ENCODE measurements at regions of chr4 and their contacts with region 1.

Region 1: GRCh38 chr4:139295206-139295941 is 5.9 kb upstream of the NAA15 start:
- DNase-seq: peak; percentile 84
- H3K4me3 ChIP-seq: peak overlapping the region; percentile 82
- H3K27ac ChIP-seq: peak overlapping the region; percentile 47
- H3K27me3 ChIP-seq: no peaks in the 10 kb centered on the region
- CTCF ChIP-seq: peak; percentile 92

Region 2: DNA sequence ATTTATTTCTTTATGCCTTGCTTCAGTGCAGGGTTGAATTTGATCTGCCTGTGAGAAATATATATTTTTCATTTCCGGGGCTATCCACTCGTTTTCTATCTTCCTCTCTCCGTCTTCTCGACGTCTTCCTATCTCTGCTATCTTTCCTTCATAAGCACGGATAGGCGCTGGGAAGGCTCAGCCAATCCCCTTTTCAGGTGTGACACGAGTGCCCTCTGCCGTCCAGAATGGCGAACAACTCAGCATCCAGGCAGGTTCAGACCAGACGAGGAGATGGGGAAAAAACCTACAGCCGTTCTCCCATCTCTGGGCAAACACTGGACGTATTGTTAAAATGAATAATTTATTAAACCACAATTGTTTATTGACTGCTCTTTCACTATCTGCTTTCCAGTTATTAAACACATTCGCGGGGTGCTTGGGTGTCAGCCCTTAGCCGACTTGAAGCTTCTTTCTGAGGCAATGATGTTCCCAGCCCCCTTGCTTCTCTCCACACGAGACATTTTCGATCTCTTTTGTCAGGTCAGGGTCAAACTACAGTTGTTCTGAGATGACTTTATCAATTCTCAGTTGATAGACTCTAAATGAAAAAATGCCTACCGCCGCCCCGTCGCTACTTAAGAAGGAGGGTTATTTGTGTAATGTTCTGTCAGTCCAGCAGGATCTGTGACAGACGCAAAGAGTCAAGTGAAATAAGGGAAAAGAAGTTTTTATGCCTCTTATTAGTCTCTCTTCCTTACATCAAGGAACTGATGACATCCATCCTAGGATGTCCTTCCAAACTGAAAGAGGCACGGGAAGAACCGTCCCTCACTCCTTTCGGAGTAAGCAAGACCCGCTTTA is 376.1 kb before region 1 on chr4:
- CTCF ChIA-PET with region 1: no interaction called
- POLR2A ChIA-PET with region 1: no interaction called
- DNase-seq: peak; percentile 65
- H3K4me3 ChIP-seq: peak overlapping the region; percentile 38
- H3K27ac ChIP-seq: no peak overlapping the region
- H3K27me3 ChIP-seq: no peaks in the 10 kb centered on the region
- CTCF ChIP-seq: peak; percentile 94

Region 3: GRCh38 chr4:139030614-139031235 is 264.6 kb before region 1 on chr4:
- CTCF ChIA-PET with region 1: interaction called, 59 read pairs
- POLR2A ChIA-PET with region 1: no interaction called
- DNase-seq: peak; percentile 65
- H3K4me3 ChIP-seq: no peak overlapping the region
- H3K27ac ChIP-seq: no peak overlapping the region
- H3K27me3 ChIP-seq: no peaks in the 10 kb centered on the region
- CTCF ChIP-seq: peak; percentile 87

Region 4: GRCh38 chr4:139099366-139099982 is 195.9 kb before region 1 on chr4:
- CTCF ChIA-PET with region 1: interaction called, 26 read pairs
- POLR2A ChIA-PET with region 1: no interaction called
- DNase-seq: peak; percentile 63
- H3K4me3 ChIP-seq: no peak overlapping the region
- H3K27ac ChIP-seq: no peak overlapping the region
- H3K27me3 ChIP-seq: no peaks in the 10 kb centered on the region
- CTCF ChIP-seq: peak; percentile 89

Region 5: GRCh38 chr4:139177868-139178611 is 117.3 kb before region 1 on chr4:
- CTCF ChIA-PET with region 1: interaction called, 15 read pairs
- POLR2A ChIA-PET with region 1: interaction called, 4 read pairs
- DNase-seq: peak; percentile 72
- H3K4me3 ChIP-seq: peak overlapping the region; percentile 81
- H3K27ac ChIP-seq: peak overlapping the region; percentile 87
- H3K27me3 ChIP-seq: no peaks in the 10 kb centered on the region
- CTCF ChIP-seq: no peak

Region 6: DNA sequence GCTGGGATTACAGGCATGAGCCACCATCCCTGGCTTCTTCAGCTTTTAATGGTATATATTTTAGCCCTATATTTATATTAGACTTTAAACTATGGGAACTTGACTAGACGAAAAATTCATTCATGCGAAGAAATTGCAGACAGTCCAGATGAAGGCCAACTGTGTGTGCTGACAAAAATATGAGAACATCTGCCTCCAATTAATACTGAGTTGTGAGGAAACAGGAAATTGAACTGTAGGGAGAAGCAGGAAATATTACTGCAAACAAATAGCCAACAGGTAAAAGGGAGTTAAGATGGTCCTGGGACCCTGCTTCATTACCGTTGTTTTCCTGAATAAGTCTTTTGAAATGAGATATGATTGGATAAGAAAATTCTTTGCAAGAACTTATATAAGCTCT is 41.7 kb before region 1 on chr4:
- CTCF ChIA-PET with region 1: interaction called, 15 read pairs
- POLR2A ChIA-PET with region 1: no interaction called
- DNase-seq: no peak
- H3K4me3 ChIP-seq: no peak overlapping the region
- H3K27ac ChIP-seq: no peak overlapping the region
- H3K27me3 ChIP-seq: no peaks in the 10 kb centered on the region
- CTCF ChIP-seq: no peak

Region 7: GRCh38 chr4:139279760-139280620 is 15.4 kb before region 1 on chr4 and contains the start of gene MGARP:
- CTCF ChIA-PET with region 1: interaction called, 44 read pairs
- POLR2A ChIA-PET with region 1: interaction called, 11 read pairs
- DNase-seq: no peak
- H3K4me3 ChIP-seq: peak within 1 kb of the TSS; percentile 69
- H3K27ac ChIP-seq: peak within 1 kb of the TSS; percentile 59
- H3K27me3 ChIP-seq: no peaks in the 10 kb centered on the region
- CTCF ChIP-seq: no peak
- polyA plus RNA-seq, gene MGARP: 42.6 and 57.7 TPM in 2 replicates

Region 8: GRCh38 chr4:139319571-139319970 is 24.2 kb after region 1 on chr4:
- CTCF ChIA-PET with region 1: interaction called, 13 read pairs
- POLR2A ChIA-PET with region 1: no interaction called
- DNase-seq: no peak
- H3K4me3 ChIP-seq: no peak overlapping the region
- H3K27ac ChIP-seq: no peak overlapping the region
- H3K27me3 ChIP-seq: no peaks in the 10 kb centered on the region
- CTCF ChIP-seq: no peak

Region 9: DNA sequence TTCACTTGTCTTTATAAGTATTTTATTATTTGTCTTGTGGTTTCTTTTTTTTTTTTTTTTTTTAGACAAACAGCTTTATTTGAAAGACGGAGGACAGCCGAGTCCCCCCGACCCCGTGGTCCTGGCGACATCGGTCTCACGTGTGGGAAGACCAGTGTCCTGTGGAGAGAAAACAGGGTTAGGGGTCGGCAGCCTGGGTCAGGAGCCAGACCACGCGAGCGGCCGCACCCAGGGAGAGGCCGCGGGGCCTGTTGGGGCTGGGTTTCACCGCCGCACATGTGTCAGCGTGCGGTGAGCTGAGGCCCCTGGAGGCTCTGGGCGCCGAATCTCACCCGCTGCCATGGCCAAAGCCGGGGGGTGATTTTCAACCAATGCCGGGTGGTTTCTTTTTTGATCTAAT is 140.7 kb after region 1 on chr4:
- CTCF ChIA-PET with region 1: no interaction called
- POLR2A ChIA-PET with region 1: no interaction called
- DNase-seq: no peak
- H3K4me3 ChIP-seq: no peak overlapping the region
- H3K27ac ChIP-seq: no peak overlapping the region
- H3K27me3 ChIP-seq: no peaks in the 10 kb centered on the region
- CTCF ChIP-seq: no peak

Measured in AG04450 (cell line).